Esophagus muscularis mucosa (tissue), 4 donors: ENCODE measurements at regions of chr17 and their contacts with region 1.

Region 1: DNA sequence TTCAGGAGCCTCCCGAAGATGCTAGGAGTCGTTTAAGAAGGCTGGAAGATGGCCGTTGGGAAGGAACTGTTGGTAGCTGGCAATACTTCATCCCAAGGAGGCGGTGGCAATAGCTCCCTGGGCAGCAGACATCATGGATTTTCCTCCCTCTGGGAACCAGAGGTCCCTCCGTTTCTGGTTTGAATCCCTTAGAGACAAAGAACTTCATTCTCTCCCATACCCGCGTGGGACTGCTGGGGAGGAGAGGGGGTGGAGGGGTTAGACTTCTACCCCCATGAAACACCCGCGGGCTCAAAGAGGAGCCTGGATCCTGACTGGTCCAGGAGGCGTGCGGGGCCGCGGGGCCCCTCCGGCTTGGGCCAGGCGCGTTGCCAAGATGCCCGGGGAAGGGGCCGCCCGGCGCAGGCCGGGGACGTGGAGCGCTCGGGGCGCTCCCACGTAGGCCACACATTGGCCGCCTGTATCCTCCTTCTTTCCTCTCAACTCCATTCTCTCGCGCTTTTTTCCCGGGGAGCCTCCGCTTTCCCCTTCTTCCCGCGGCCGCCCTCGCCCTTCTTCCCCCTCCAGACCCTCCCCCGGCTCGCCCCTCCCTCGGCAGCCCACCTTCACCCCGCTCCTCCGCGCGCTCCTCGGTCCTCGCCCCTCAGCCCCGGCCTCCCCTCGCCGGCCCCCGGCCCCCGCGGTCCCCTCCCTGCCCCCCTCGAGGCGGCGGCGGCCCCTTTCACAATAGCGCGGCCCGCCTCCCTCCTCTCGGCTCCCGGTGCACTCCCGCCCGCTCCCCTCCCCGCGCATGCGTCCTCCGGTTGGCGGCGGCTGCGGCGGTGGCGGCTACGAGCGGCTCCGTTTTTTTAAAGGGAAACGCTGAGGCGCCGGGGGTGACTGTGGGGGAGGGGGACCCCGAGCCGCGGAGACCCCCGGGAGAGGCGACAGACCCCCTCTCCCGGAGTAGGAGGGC is at the start of gene MSL1:
- DNase-seq: peak; percentile 96
- H3K4me3 ChIP-seq: peak within 1 kb of the TSS; percentile 80 to 100 (median 97)
- H3K27ac ChIP-seq: peak within 1 kb of the TSS; percentile 97 to 99 (median 98)
- H3K4me1 ChIP-seq: peaks cover 19 to 45% (median 42%) of the 10 kb centered on the region in 4 donors
- H3K27me3 ChIP-seq: no peaks in the 10 kb centered on the region
- CTCF ChIP-seq: no peak
- EP300 ChIP-seq: no peak
- POLR2A ChIP-seq: peak; percentile 78
- total RNA-seq, gene MSL1: 64.1 to 86.8 (median 72.2) TPM

Region 2: DNA sequence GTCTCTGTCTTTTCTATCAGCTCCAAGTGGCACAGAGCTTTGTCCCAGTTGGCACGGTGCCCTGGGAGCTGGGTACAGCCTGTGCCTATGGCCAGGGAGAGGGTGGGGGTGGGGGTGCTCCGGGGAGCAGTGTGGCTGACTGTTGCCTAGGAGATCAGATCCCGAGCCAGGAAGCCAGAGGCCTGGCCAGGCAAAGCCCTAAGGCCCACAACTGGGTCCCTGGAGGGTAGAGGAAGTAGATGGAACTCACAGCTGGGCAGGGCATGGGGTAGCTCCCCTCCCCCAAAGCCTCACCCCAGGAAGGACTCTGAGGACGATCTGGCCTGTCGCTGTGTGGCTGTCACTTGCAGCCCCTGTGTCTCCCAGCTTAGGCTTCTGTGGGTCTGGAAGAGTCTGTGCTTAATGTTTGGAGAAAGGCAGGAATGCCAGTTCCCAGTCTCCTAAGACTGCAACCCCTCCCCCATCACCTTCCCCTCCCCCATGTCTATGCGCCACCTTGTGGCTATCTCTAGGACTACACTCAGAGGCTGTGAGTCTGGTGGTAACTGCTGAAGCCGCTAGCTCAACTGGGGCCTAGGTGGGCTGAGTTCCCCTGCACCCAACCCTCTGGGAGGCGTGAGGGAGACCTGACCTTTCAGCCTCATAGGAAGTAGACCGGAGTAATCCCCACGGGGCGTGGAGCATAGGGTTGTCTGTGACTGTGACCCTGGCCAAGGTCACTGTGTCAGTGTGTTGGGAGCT is 46.1 kb before region 1 on chr17:
- intact Hi-C with region 1: no loop called
- DNase-seq: no peak
- H3K4me3 ChIP-seq: peak overlapping the region; percentile 26 to 41 (median 31)
- H3K27ac ChIP-seq: peak overlapping the region; percentile 91 to 99 (median 99)
- H3K4me1 ChIP-seq: peaks cover 70 to 86% (median 79%) of the 10 kb centered on the region in 4 donors
- H3K27me3 ChIP-seq: no peaks in the 10 kb centered on the region
- CTCF ChIP-seq: peak in 2 of 3 experiments; percentile 90 to 94
- EP300 ChIP-seq: peak; percentile 53
- POLR2A ChIP-seq: no peak

Region 3: GRCh38 chr17:40168262-40168832 is 46.9 kb after region 1 on chr17:
- intact Hi-C with region 1: loop called (anchors 2 kb)
- DNase-seq: no peak
- H3K4me3 ChIP-seq: no peak overlapping the region
- H3K27ac ChIP-seq: peak overlapping the region; percentile 68 to 72 (median 70)
- H3K4me1 ChIP-seq: peaks cover 0 to 18% (median 14%) of the 10 kb centered on the region in 4 donors
- H3K27me3 ChIP-seq: no peaks in the 10 kb centered on the region
- CTCF ChIP-seq: peak; percentile 83 to 95 (median 85)
- EP300 ChIP-seq: no peak
- POLR2A ChIP-seq: no peak